PC-3 (cell line): ENCODE measurements at regions of chr17 and their contacts with region 1.

Region 1: GRCh38 chr17:72120642-72121163 is at the start of gene SOX9:
- DNase-seq: peak; percentile 99
- ATAC-seq: peak; percentile 76
- H3K4me3 ChIP-seq: peak within 1 kb of the TSS; percentile 85
- H3K27ac ChIP-seq: peak within 1 kb of the TSS; percentile 83
- H3K4me1 ChIP-seq: peaks cover 37% of the 10 kb centered on the region
- H3K27me3 ChIP-seq: no peaks in the 10 kb centered on the region
- CTCF ChIP-seq: no peak
- total RNA-seq, gene SOX9: 119 and 151 TPM in 2 replicates

Region 2: DNA sequence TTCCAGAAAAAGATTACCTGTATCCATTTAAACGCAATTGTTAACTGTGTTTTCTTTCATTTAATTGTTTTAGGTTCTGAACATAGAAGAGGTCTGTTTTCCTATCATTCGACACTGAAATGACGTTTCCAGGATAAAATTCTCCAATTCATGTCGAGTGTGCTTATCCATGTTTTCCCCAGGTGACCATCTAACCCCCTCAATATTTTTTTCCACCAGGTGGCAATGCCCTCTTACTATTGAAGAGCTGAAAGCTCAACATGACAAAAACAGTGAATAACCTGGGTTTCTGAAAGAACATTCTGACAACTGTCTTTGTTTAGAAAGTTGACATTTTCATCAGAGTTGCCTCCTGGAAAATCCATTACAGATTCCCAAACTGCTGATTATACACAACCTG is 1002.7 kb before region 1 on chr17:
- CTCF ChIA-PET with region 1: no interaction called
- POLR2A ChIA-PET with region 1: no interaction called
- intact Hi-C with region 1: loop called (anchors 2 kb)
- DNase-seq: peak; percentile 89
- ATAC-seq: peak; percentile 58; the same call in 1 of the 2 replicates
- H3K4me3 ChIP-seq: no peak overlapping the region
- H3K27ac ChIP-seq: no peak overlapping the region
- H3K4me1 ChIP-seq: peaks cover 3% of the 10 kb centered on the region; the same call in 1 of the 2 replicates
- H3K27me3 ChIP-seq: no peaks in the 10 kb centered on the region
- CTCF ChIP-seq: peak; percentile 96

Region 3: DNA sequence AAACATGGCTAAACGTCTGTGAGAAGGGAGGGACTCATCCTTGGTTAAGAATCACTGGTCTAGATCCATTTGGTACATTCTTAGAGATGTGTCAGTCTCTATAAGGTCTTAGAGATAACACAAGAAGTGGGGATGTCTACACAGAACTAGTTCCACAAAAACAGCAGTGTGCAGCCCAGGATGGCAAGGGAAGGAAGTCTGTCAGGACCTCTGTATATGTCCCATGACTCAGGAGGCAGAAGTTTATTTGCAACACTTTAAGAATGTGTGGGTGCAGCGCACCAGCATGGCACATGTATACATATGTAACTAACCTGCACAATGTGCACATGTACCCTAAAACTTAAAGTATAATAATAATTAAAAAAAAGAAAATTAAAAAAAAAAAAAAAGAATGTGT is 548.4 kb before region 1 on chr17:
- CTCF ChIA-PET with region 1: no interaction called
- POLR2A ChIA-PET with region 1: no interaction called
- intact Hi-C with region 1: loop called (anchors 2 kb)
- DNase-seq: peak; percentile 25
- ATAC-seq: peak; percentile 33
- H3K4me3 ChIP-seq: no peak overlapping the region
- H3K27ac ChIP-seq: no peak overlapping the region
- H3K4me1 ChIP-seq: 0 out of 2 replicates have a peak, but pooled peaks cover 3% of the 10 kb centered on the region
- H3K27me3 ChIP-seq: no peaks in the 10 kb centered on the region
- CTCF ChIP-seq: no peak

Region 4: DNA sequence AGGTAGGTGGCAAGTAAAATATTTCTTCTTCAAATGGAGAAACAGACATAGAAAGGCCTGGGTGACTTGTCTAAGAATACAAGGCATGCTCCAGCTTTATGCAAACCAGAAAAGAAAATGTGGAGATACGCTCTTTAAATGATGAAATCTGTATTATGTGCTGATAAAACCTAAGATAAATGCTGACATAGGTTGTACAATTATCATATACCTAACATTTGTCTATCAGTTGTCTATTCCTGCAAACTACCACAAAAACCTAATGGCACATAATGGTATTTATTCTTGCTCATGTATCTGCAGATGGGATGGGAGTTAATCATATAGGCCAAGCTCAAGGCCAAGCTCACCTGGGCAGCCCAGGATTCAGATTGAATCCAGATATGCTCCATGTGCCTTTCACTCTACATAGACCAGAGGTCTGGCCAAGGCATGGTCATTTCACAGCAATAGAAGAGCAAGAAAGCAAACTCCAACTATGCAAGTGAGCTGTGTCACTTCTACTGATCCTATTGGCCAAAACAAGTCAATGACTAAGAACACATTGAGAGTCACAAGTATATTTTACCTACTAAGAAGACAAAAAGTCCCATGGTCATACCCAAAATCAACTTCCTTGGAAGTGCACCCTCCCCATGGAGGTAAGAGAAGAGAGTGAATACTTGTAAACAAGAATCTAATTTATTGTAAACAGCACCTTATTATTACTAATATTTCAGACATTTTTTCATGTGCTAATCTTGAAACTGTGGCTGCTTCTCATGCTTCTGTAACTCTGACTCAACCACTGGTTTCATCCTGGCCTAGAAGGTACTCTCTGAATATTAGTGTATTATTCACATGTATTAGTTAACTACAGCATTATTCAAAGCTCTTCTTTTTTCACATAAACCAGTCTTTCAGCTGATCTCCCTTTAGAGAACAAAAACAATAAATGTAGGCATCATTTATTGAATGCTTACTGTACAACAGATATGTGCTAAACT is 270.6 kb before region 1 on chr17:
- CTCF ChIA-PET with region 1: no interaction called
- POLR2A ChIA-PET with region 1: no interaction called
- intact Hi-C with region 1: loop called (anchors 2 kb)
- DNase-seq: no peak
- ATAC-seq: no peak
- H3K4me3 ChIP-seq: no peak overlapping the region
- H3K27ac ChIP-seq: no peak overlapping the region
- H3K4me1 ChIP-seq: no peaks in the 10 kb centered on the region
- H3K27me3 ChIP-seq: no peaks in the 10 kb centered on the region
- CTCF ChIP-seq: no peak

Region 5: DNA sequence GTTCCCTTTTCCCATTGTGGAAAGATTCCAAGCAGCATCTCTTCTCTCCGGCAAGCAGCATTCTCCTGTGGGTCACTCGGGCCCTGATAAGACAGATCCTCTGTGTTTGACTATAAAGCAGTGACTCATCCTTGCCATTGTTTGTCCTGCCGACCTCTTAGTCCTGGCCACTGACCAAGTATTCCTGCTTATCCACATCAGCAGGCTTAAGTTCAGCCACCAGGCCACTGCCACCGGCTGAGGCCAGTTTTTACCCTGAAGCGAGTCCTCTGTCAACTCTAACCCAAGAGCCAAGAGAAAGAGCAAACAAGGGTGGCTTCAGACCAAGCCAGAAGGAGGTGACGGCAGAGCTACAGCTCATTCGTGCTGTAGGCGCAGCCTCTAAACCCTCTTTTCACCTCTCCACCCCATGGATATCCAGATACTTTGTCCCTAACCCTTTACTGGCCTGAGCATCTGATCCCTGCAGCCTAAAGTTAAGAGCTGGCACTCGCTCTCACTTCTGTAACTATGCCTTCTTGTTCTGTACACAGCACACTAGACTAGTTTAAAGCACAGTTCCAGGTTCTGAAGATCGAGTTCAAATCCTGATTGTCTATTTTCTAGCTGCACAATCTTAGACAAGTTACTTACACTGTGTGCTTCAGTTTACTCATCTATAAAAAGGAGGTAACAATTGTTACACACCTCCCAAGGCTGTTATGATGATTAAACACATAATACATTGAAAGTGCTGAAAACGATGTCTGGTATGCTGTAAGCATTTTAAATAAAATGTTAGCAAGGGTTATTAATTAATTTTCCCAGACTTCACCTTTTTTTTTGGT is 31.1 kb after region 1 on chr17:
- CTCF ChIA-PET with region 1: no interaction called
- POLR2A ChIA-PET with region 1: interaction called, 3 read pairs
- intact Hi-C with region 1: loop called (anchors 2 kb)
- DNase-seq: peak; percentile 97
- ATAC-seq: peak; percentile 92
- H3K4me3 ChIP-seq: peak overlapping the region; percentile 45
- H3K27ac ChIP-seq: peak overlapping the region; percentile 80
- H3K4me1 ChIP-seq: peaks cover 23% of the 10 kb centered on the region
- H3K27me3 ChIP-seq: no peaks in the 10 kb centered on the region
- CTCF ChIP-seq: no peak

Region 6: GRCh38 chr17:72212041-72212440 is 91.3 kb after region 1 on chr17:
- CTCF ChIA-PET with region 1: no interaction called
- POLR2A ChIA-PET with region 1: no interaction called
- intact Hi-C with region 1: no loop called
- DNase-seq: no peak
- ATAC-seq: no peak
- H3K4me3 ChIP-seq: no peak overlapping the region
- H3K27ac ChIP-seq: no peak overlapping the region
- H3K4me1 ChIP-seq: no peaks in the 10 kb centered on the region
- H3K27me3 ChIP-seq: no peaks in the 10 kb centered on the region
- CTCF ChIP-seq: no peak

Region 7: GRCh38 chr17:72421128-72422092 is 300.7 kb after region 1 on chr17:
- CTCF ChIA-PET with region 1: no interaction called
- POLR2A ChIA-PET with region 1: interaction called, 3 read pairs
- intact Hi-C with region 1: loop called (anchors 5 kb)
- DNase-seq: peak; percentile 100
- ATAC-seq: peak; percentile 80
- H3K4me3 ChIP-seq: no peak overlapping the region
- H3K27ac ChIP-seq: peak overlapping the region; percentile 94
- H3K4me1 ChIP-seq: peaks cover 41% of the 10 kb centered on the region
- H3K27me3 ChIP-seq: no peaks in the 10 kb centered on the region
- CTCF ChIP-seq: no peak